Activated B cell treated with CpG ODN at 0.5 μM for 24 hours (primary cell): ENCODE measurements at regions of chr1 and their contacts with region 1.

Region 1: GRCh38 chr1:32291708-32292492 is at the start of gene HDAC1:
- DNase-seq: peak; percentile 91
- ATAC-seq: peak; percentile 98
- H3K4me3 Mint-ChIP-seq: peak within 1 kb of the TSS; percentile 100
- H3K27ac Mint-ChIP-seq: peak within 1 kb of the TSS; percentile 98
- H3K4me1 Mint-ChIP-seq: peaks cover 48% of the 10 kb centered on the region
- H3K27me3 Mint-ChIP-seq: no peaks in the 10 kb centered on the region
- CTCF ChIP-seq: no peak
- total RNA-seq, gene HDAC1: 204 and 212 TPM in 2 replicates

Region 2: GRCh38 chr1:31155216-31155841 is 1136.6 kb before region 1 on chr1:
- CTCF ChIA-PET with region 1: no interaction called
- POLR2A ChIA-PET with region 1: no interaction called
- intact Hi-C with region 1: no loop called
- DNase-seq: peak; percentile 70
- ATAC-seq: peak; percentile 77
- H3K4me3 Mint-ChIP-seq: peak overlapping the region; percentile 85
- H3K27ac Mint-ChIP-seq: peak overlapping the region; percentile 70
- H3K4me1 Mint-ChIP-seq: peaks cover 11% of the 10 kb centered on the region
- H3K27me3 Mint-ChIP-seq: no peaks in the 10 kb centered on the region
- CTCF ChIP-seq: no peak

Region 3: DNA sequence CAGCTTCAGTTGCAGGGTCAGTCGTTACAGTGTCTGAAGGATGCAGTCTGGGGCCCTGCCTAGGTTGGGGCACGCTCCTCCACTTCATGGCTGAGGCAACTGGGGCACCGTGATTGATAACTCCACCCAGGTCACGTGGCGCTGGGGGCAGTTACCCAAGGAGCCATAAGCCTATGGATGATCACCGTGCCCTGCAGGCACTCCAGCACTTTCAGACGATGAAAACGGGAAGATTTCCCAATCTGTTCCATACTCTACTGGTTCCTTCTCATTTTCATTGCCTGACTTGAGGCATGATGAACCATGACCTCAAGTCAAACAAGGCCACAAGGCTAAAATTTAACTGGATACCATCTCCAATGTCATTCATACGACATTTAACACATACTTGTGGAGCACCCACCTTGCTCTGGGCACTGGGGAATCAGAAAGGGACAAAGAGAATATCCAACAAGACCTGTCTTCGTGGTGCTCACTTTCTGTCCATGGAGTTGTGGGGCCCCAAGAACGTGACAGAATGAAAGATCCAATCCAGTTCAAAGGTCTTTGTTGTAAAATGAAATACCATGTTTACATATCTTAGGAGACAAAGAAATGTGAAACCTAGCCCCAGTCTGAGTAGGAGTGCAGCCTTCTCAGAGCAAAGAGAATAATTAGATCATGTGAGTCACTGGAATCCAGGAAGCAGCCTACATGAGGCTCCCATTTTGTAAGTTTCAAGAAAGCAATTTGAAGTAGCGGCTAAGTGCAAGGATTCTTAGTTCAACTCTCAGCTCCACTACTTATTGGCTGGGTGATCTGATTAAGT is 436.7 kb before region 1 on chr1:
- CTCF ChIA-PET with region 1: no interaction called
- POLR2A ChIA-PET with region 1: no interaction called
- intact Hi-C with region 1: no loop called
- DNase-seq: no peak
- ATAC-seq: no peak
- H3K4me3 Mint-ChIP-seq: no peak overlapping the region
- H3K27ac Mint-ChIP-seq: no peak overlapping the region
- H3K4me1 Mint-ChIP-seq: no peaks in the 10 kb centered on the region
- H3K27me3 Mint-ChIP-seq: no peaks in the 10 kb centered on the region
- CTCF ChIP-seq: no peak

Region 4: DNA sequence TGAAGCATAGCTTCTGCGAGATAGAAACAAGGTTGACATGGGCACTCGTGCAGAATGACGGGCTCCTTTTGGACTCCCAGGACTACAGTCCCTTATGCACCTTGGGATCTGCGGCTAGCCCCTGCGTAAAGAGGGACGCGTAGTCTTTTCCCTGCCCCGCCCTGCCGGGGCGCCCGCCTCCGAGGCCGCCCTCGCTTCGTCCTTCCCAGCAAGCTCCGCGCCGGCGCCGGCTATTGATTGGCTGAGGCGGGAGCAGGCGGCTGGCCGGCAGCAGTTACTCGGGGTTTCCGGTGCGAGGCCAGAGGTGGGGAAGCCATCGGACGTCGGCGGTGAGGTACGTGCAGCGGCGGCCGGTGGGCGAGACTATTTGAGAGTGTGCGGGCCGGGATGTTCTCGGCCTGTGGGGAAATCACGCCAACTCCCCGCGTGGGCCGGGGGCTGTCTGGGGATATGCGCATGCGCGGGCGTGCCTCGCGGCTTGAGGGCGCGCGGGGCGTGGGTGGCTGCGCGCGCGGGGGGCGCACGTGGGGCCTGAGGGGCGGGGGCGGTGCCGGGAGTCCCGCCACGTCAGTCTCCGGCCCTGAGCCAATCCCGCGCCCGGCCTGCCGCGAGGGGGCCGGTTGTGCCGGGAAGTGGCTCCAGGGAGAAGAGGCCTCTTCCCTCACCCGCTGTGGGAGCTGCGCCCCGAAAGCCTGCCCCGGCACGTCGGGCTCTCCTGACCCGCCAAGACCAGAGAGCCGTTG is 112.3 kb before region 1 on chr1 and contains the start of gene TXLNA:
- CTCF ChIA-PET with region 1: no interaction called
- POLR2A ChIA-PET with region 1: interaction called, 7 read pairs
- intact Hi-C with region 1: loop called (anchors 1 kb)
- DNase-seq: peak; percentile 89
- ATAC-seq: peak; percentile 91
- H3K4me3 Mint-ChIP-seq: peak within 1 kb of the TSS; percentile 90
- H3K27ac Mint-ChIP-seq: peak within 1 kb of the TSS; percentile 98
- H3K4me1 Mint-ChIP-seq: peaks cover 40% of the 10 kb centered on the region
- H3K27me3 Mint-ChIP-seq: no peaks in the 10 kb centered on the region
- CTCF ChIP-seq: no peak
- total RNA-seq, gene TXLNA: 52.0 and 54.1 TPM in 2 replicates

Region 5: GRCh38 chr1:32221980-32222755 is 69.7 kb before region 1 on chr1 and contains the starts of genes EIF3I and TMEM234:
- CTCF ChIA-PET with region 1: no interaction called
- POLR2A ChIA-PET with region 1: interaction called, 13 read pairs
- intact Hi-C with region 1: loop called (anchors 1 kb)
- DNase-seq: peak; percentile 80
- ATAC-seq: peak; percentile 85
- H3K4me3 Mint-ChIP-seq: peak within 1 kb of the TSS; percentile 96
- H3K27ac Mint-ChIP-seq: peak within 1 kb of the TSS; percentile 95
- H3K4me1 Mint-ChIP-seq: peaks cover 50% of the 10 kb centered on the region
- H3K27me3 Mint-ChIP-seq: no peaks in the 10 kb centered on the region
- CTCF ChIP-seq: no peak
- total RNA-seq, gene EIF3I: 196 and 213 TPM in 2 replicates
- total RNA-seq, gene TMEM234: 31.8 and 35.5 TPM in 2 replicates

Region 6: DNA sequence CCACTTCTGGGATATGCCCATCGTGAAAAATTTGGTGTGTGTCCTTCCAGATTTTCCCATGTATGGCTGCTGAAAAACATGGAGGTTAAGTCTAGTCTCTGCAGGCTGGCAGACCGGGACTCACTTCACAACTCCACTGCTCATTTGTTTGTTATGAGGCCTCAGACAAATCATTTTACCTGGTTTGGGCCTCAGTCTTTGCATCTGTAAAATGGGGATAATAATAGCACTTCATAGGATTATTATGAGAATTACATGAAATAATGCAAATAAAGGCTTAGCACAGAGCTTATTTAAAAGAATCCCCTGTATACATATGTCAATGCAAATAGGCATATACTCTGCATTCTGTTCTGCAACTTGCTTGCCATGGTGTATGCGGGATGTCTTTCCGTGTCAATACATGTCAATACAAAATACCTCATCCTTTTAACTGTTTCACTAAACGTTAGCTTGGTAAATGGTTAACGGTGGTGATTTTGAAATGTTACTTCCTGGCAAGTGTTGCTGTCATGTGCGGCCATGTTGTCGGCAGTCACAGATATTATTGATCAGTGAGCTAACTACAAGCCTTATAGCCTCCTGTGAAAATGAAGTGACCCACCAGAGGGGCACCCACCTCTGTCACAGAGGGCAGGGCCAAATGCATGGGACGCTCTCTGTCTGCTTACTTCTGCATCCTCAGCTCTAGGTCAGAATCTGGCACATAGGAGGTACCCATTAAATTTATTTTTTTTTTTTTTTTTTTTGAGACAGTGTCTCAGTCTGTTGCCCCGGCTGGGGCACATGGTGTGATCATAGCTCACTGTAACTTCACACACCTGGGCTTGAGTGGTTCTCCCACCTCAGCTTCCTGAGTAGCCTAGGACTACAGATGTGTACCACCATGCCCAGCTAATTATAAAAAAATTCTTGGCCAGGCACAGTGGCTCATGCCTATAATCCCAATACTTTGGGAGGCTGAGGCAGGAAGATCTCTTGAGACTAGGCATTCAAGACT is 36.5 kb before region 1 on chr1:
- CTCF ChIA-PET with region 1: interaction called, 27 read pairs
- POLR2A ChIA-PET with region 1: interaction called, 107 read pairs
- intact Hi-C with region 1: loop called (anchors 1 kb)
- DNase-seq: no peak
- ATAC-seq: no peak
- H3K4me3 Mint-ChIP-seq: no peak overlapping the region
- H3K27ac Mint-ChIP-seq: peak overlapping the region; percentile 75
- H3K4me1 Mint-ChIP-seq: peaks cover 64% of the 10 kb centered on the region
- H3K27me3 Mint-ChIP-seq: no peaks in the 10 kb centered on the region
- CTCF ChIP-seq: no peak

Region 7: DNA sequence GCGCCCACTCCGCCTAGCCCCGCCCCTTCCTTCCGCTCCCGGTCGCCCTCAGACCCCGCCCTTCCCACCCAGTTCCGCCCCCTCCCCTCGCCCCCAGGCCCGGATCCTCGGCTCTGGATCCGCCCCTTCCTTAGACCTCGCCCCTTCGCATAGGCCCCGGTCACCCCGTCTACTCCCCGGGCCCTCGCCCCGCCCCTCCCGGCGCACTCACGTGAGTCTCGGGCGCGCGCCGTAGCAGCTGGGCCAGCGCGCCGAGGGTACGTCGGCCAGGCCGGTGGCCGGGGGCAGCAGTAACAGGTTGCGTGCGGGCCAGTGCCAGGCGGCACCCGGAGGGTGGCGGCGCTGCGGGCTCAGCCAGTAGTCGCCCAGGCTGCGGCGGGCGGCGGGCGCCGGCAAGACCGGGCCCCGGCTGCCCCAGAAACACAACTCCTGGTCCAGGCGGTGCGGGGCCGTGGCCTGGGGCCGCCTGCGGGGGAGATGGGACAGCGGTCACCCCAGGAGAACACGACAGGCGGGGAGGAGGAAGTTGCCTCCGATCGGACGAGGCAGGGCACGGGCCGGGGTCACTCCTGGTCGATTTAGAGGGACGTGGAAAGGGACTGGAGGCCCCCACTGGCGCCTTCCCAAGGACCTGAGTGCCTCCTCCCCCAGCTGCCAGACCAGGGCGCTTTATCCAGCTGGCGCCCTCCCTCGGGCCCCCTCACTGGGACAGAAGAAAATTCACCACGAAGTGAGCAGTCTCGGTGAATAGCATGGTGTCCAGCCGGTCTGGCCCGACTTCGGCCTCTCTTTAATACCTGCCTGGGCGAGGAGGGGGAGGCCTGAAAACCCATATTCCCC is 59.7 kb after region 1 on chr1:
- CTCF ChIA-PET with region 1: no interaction called
- POLR2A ChIA-PET with region 1: interaction called, 8 read pairs
- intact Hi-C with region 1: loop called (anchors 5 kb)
- DNase-seq: peak; percentile 90
- ATAC-seq: peak; percentile 96
- H3K4me3 Mint-ChIP-seq: peak overlapping the region; percentile 91
- H3K27ac Mint-ChIP-seq: peak overlapping the region; percentile 91
- H3K4me1 Mint-ChIP-seq: peaks cover 22% of the 10 kb centered on the region
- H3K27me3 Mint-ChIP-seq: no peaks in the 10 kb centered on the region
- CTCF ChIP-seq: no peak

Region 8: GRCh38 chr1:32474954-32475353 is 183.1 kb after region 1 on chr1:
- CTCF ChIA-PET with region 1: no interaction called
- POLR2A ChIA-PET with region 1: no interaction called
- intact Hi-C with region 1: no loop called
- DNase-seq: no peak
- ATAC-seq: no peak
- H3K4me3 Mint-ChIP-seq: no peak overlapping the region
- H3K27ac Mint-ChIP-seq: no peak overlapping the region
- H3K4me1 Mint-ChIP-seq: no peaks in the 10 kb centered on the region
- H3K27me3 Mint-ChIP-seq: peaks cover 22% of the 10 kb centered on the region
- CTCF ChIP-seq: no peak